ENCODE measurements at regions of chr16 and their contacts with region 1.

Region 1: DNA sequence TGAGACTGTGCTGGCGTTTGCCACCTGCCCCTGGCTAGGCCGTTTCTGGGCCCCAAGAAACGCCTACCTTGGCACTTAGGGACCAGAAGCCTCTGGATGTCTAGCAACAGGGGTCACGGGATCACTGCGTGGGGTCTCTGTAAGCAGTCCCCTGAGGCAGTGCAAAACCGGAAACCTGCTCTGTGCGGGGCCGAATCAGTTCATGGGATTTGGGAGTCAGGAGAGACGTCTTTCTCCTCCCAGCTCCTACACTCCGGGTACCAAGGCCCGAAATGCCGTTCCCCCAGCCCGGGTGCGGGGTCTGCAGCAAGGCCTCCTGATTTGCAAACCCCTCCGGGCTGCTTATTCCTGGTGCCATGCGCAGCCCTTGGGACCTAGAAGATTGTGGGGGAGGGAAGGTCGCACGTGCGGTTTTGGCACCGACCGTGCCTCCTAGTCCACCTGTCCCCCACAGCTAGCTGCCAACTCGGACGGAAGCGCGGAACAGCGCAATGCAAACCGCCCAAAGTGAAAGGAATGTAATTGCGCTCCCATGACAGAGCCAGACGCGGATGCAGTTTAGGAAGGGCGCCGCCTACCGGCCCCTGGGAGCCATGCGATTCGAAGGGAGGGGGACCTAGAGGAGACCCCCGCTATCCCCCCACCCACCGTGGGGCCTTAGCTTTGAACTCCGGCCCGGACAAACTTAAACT is 6.5 kb downstream of the IRX5 start:
- DNase-seq: no peak

Region 2: GRCh38 chr16:54027126-54027922 is 909.8 kb before region 1 on chr16:
- intact Hi-C with region 1: no loop called
- DNase-seq: no peak

Region 3: GRCh38 chr16:54231919-54232318 is 705.2 kb before region 1 on chr16:
- intact Hi-C with region 1: no loop called
- DNase-seq: no peak

Region 4: GRCh38 chr16:54633943-54634362 is 303.2 kb before region 1 on chr16:
- intact Hi-C with region 1: loop called (anchors 5 kb)
- DNase-seq: no peak

Region 5: GRCh38 chr16:55379876-55380390 is 442.8 kb after region 1 on chr16:
- intact Hi-C with region 1: no loop called
- DNase-seq: no peak

Measured in cardiac septum (tissue), 1 donor.